CD8-positive, alpha-beta T cell (primary cell): ENCODE measurements at regions of chr18 and their contacts with region 1.

Region 1: DNA sequence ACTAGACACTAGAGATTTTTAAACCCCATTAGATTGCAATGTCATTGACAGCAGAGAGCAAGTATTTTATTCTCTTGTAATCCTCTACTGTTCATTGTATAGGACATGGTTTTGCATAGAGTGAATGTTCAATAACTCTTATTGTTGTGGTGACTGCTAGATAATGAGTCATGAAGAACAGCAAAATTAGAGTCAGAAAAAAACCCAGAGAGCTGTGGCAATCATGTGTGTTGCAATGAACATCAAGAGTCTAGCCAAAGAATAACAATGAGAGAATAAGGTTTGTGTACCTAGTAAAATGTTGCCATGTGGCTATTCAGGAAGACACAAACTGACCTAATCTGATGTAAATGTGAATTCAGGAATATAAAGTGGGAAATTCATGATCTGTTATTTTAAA is 684.0 kb downstream of the DSC3 start:
- DNase-seq: no peak
- ATAC-seq: no peak
- H3K4me3 ChIP-seq: no peak overlapping the region
- H3K4me3 Mint-ChIP-seq: no peak overlapping the region
- H3K27ac ChIP-seq: no peak overlapping the region
- H3K27ac Mint-ChIP-seq: no peak overlapping the region
- H3K4me1 ChIP-seq: no peaks in the 10 kb centered on the region
- H3K4me1 Mint-ChIP-seq: no peaks in the 10 kb centered on the region
- H3K27me3 ChIP-seq: no peaks in the 10 kb centered on the region
- H3K27me3 Mint-ChIP-seq: no peaks in the 10 kb centered on the region
- CTCF ChIP-seq: no peak

Region 2: GRCh38 chr18:30328839-30329238 is 29.7 kb before region 1 on chr18:
- CTCF ChIA-PET with region 1: no interaction called
- POLR2A ChIA-PET with region 1: no interaction called
- intact Hi-C with region 1: no loop called
- DNase-seq: no peak
- ATAC-seq: no peak
- H3K4me3 ChIP-seq: no peak overlapping the region
- H3K4me3 Mint-ChIP-seq: no peak overlapping the region
- H3K27ac ChIP-seq: no peak overlapping the region
- H3K27ac Mint-ChIP-seq: no peak overlapping the region
- H3K4me1 ChIP-seq: no peaks in the 10 kb centered on the region
- H3K4me1 Mint-ChIP-seq: no peaks in the 10 kb centered on the region
- H3K27me3 ChIP-seq: no peaks in the 10 kb centered on the region
- H3K27me3 Mint-ChIP-seq: no peaks in the 10 kb centered on the region
- CTCF ChIP-seq: no peak

Region 3: DNA sequence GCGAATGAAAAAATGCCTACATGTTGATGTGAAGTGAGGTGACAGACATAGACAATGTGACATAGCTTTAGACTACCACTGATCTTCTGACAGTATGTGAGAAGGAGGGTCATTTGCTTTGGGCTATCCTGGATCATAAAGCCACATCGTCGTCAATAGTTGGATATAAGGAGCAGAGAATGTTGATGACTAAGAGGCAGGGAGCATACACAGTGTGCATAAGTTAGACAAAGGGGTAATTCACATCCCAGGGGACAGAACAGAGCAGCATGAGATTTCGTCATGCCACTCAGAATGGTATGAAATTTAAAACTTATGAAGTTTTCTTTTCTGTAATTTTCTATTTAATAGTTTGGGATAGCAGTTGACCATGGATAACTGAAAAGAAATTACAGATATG is 280.8 kb after region 1 on chr18:
- CTCF ChIA-PET with region 1: no interaction called
- POLR2A ChIA-PET with region 1: no interaction called
- intact Hi-C with region 1: no loop called
- DNase-seq: no peak
- ATAC-seq: no peak
- H3K4me3 ChIP-seq: no peak overlapping the region
- H3K4me3 Mint-ChIP-seq: no peak overlapping the region
- H3K27ac ChIP-seq: no peak overlapping the region
- H3K27ac Mint-ChIP-seq: no peak overlapping the region
- H3K4me1 ChIP-seq: no peaks in the 10 kb centered on the region
- H3K4me1 Mint-ChIP-seq: no peaks in the 10 kb centered on the region
- H3K27me3 ChIP-seq: no peaks in the 10 kb centered on the region
- H3K27me3 Mint-ChIP-seq: no peaks in the 10 kb centered on the region
- CTCF ChIP-seq: no peak

Region 4: DNA sequence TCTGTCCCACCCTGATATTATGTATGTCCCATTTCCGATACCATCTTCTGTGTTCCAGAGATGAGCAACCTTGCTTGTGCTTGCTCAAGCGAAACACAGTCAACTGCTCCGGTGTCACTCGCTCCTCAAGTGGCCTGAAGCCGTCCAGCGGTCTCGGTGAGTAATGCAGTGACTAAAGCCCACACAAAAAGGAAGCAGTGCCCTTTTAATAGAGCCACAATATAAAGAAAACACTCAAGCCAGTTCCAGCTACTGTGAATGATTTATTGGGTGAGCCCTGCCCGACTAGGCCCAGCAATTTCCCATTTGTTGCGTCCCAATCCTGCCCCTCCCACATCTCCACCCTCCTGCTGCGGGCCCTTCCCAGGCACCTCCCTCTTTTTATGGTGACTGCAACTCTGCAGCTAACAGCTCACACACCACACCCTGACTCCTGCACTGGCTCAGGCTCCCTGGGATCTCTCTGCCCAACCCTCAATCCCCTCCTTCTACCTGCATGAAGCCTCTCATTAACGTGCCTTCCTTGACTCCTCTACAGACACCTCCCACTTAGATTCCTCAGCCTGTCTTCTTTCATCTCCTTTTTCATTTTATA is 848.3 kb after region 1 on chr18:
- CTCF ChIA-PET with region 1: no interaction called
- POLR2A ChIA-PET with region 1: no interaction called
- intact Hi-C with region 1: loop called in 1 of 2 experiments (anchors 5 kb)
- DNase-seq: peak in 1 of 9 experiments; percentile 22
- ATAC-seq: no peak
- H3K4me3 ChIP-seq: no peak overlapping the region
- H3K4me3 Mint-ChIP-seq: no peak overlapping the region
- H3K27ac ChIP-seq: no peak overlapping the region
- H3K27ac Mint-ChIP-seq: no peak overlapping the region
- H3K4me1 ChIP-seq: no peaks in the 10 kb centered on the region
- H3K4me1 Mint-ChIP-seq: no peaks in the 10 kb centered on the region
- H3K27me3 ChIP-seq: no peaks in the 10 kb centered on the region
- H3K27me3 Mint-ChIP-seq: peaks cover 2% of the 10 kb centered on the region
- CTCF ChIP-seq: no peak